Psoas muscle (tissue), 8 donors: ENCODE measurements at regions of chr1 and their contacts with region 1.

Region 1: GRCh38 chr1:12285496-12286143 is 55.8 kb downstream of the VPS13D start:
- DNase-seq: no peak
- ATAC-seq: no peak
- H3K4me3 ChIP-seq: no peak overlapping the region
- H3K27ac ChIP-seq: no peak overlapping the region
- H3K4me1 ChIP-seq: no peaks in the 10 kb centered on the region
- H3K27me3 ChIP-seq: no peaks in the 10 kb centered on the region
- CTCF ChIP-seq: no peak

Region 2: DNA sequence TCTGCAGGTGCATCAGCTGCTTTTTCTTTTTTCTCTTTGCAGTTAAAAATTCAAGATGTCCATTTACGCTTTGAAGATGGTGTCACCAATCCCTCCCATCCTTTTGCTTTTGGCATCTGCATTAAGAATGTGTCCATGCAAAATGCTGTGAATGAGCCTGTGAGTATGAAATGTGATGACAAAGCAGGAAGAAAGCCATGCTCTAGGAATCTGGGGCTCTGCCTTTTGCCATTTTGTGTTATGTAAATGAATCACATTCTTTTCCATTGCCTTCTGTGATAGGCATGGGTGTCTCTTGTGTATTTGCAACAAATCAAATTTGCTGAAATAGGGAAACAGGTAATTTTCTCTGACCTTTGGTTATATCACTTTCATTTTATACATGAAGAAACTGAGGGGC is 36.4 kb before region 1 on chr1:
- intact Hi-C with region 1: loop called in 1 of 2 experiments (anchors 5 kb)
- DNase-seq: no peak
- ATAC-seq: no peak
- H3K4me3 ChIP-seq: no peak overlapping the region
- H3K27ac ChIP-seq: no peak overlapping the region
- H3K4me1 ChIP-seq: peaks cover 12% of the 10 kb centered on the region
- H3K27me3 ChIP-seq: no peaks in the 10 kb centered on the region
- CTCF ChIP-seq: no peak